ENCODE measurements at regions of chr9 and their contacts with region 1.

Region 1: GRCh38 chr9:104911032-104911607 is 16.8 kb downstream of the ABCA1 start:
- DNase-seq: no peak
- H3K4me3 ChIP-seq: no peak overlapping the region
- H3K27ac ChIP-seq: peak overlapping the region in 4 of 5 donors; percentile 30 to 80 (median 76)
- H3K4me1 ChIP-seq: peaks cover 94 to 97% of the 10 kb centered on the region in 2 donors
- H3K27me3 ChIP-seq: no peaks in the 10 kb centered on the region
- CTCF ChIP-seq: no peak
- POLR2A ChIP-seq: peak in 1 of 2 donors; percentile 10

Region 2: DNA sequence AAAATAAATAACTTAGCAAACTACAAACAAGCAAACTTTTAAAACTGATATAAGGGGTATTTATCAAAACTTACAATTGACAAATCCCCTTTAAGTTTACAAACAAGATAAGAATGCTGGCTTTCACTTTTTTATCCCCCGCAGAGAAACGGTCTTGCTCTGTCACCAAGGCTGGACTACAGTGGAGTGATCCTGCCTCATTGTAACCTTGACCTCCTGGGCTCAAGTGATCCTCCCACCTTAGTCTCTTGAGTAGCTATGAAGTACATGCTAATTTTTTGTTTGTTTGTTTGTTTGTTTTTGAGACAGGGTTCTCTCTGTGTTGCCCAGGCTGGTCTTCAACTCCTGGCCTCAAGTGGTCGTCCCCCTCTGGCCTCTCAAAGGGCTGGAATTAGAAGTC is 172.7 kb before region 1 on chr9:
- intact Hi-C with region 1: no loop called
- DNase-seq: peak in 2 of 7 donors; percentile 11 to 19
- H3K4me3 ChIP-seq: no peak overlapping the region
- H3K27ac ChIP-seq: no peak overlapping the region
- H3K4me1 ChIP-seq: peaks cover 0 to 6% of the 10 kb centered on the region in 2 donors
- H3K27me3 ChIP-seq: no peaks in the 10 kb centered on the region
- CTCF ChIP-seq: no peak
- POLR2A ChIP-seq: no peak

Region 3: GRCh38 chr9:104850786-104851545 is 60.2 kb before region 1 on chr9:
- intact Hi-C with region 1: no loop called
- DNase-seq: peak in 3 of 7 donors; percentile 0 to 46 (median 11)
- H3K4me3 ChIP-seq: no peak overlapping the region
- H3K27ac ChIP-seq: peak overlapping the region in 3 of 5 donors; percentile 20 to 51 (median 47)
- H3K4me1 ChIP-seq: peaks cover 29 to 32% of the 10 kb centered on the region in 2 donors
- H3K27me3 ChIP-seq: no peaks in the 10 kb centered on the region
- CTCF ChIP-seq: no peak
- POLR2A ChIP-seq: no peak

Region 4: GRCh38 chr9:104863180-104863883 is 47.8 kb before region 1 on chr9:
- intact Hi-C with region 1: loop called in 1 of 2 experiments (anchors 10 kb)
- DNase-seq: peak; percentile 50 to 84 (median 63)
- H3K4me3 ChIP-seq: no peak overlapping the region
- H3K27ac ChIP-seq: peak overlapping the region; percentile 8 to 93 (median 47)
- H3K4me1 ChIP-seq: peaks cover 63 to 75% of the 10 kb centered on the region in 2 donors
- H3K27me3 ChIP-seq: no peaks in the 10 kb centered on the region
- CTCF ChIP-seq: peak; percentile 52 to 81 (median 76)
- POLR2A ChIP-seq: no peak